ENCODE measurements at regions of chr1 and their contacts with region 1.

Region 1: GRCh38 chr1:67489643-67490042 is 59.4 kb upstream of the SERBP1 start:
- DNase-seq: peak in 2 of 9 donors; percentile 5 to 13
- ATAC-seq: no peak
- H3K4me3 ChIP-seq: no peak overlapping the region
- H3K4me3 Mint-ChIP-seq: no peak overlapping the region
- H3K27ac ChIP-seq: no peak overlapping the region
- H3K27ac Mint-ChIP-seq: no peak overlapping the region
- H3K4me1 ChIP-seq: no peaks in the 10 kb centered on the region
- H3K4me1 Mint-ChIP-seq: peaks cover 0 to under 1% (median 0%) of the 10 kb centered on the region in 7 donors
- H3K27me3 ChIP-seq: no peaks in the 10 kb centered on the region
- H3K27me3 Mint-ChIP-seq: no peaks in the 10 kb centered on the region

Region 2: GRCh38 chr1:67041841-67042503 is 447.7 kb before region 1 on chr1:
- CTCF ChIA-PET with region 1: no interaction called
- POLR2A ChIA-PET with region 1: no interaction called
- intact Hi-C with region 1: no loop called
- DNase-seq: no peak
- ATAC-seq: no peak
- H3K4me3 ChIP-seq: no peak overlapping the region
- H3K4me3 Mint-ChIP-seq: no peak overlapping the region
- H3K27ac ChIP-seq: no peak overlapping the region
- H3K27ac Mint-ChIP-seq: no peak overlapping the region
- H3K4me1 ChIP-seq: no peaks in the 10 kb centered on the region
- H3K4me1 Mint-ChIP-seq: peaks cover 2 to 36% (median 14%) of the 10 kb centered on the region in 7 donors
- H3K27me3 ChIP-seq: no peaks in the 10 kb centered on the region
- H3K27me3 Mint-ChIP-seq: no peaks in the 10 kb centered on the region

Region 3: GRCh38 chr1:67347688-67348472 is 141.8 kb before region 1 on chr1:
- CTCF ChIA-PET with region 1: interaction called, 3 read pairs
- POLR2A ChIA-PET with region 1: no interaction called
- intact Hi-C with region 1: loop called in 1 of 2 experiments (anchors 1 kb)
- DNase-seq: no peak
- ATAC-seq: peak; percentile 34
- H3K4me3 ChIP-seq: no peak overlapping the region
- H3K4me3 Mint-ChIP-seq: no peak overlapping the region
- H3K27ac ChIP-seq: no peak overlapping the region
- H3K27ac Mint-ChIP-seq: peak overlapping the region in 1 of 9 donors; percentile 68
- H3K4me1 ChIP-seq: no peaks in the 10 kb centered on the region
- H3K4me1 Mint-ChIP-seq: peaks cover 3 to 36% (median 8%) of the 10 kb centered on the region in 7 donors
- H3K27me3 ChIP-seq: no peaks in the 10 kb centered on the region
- H3K27me3 Mint-ChIP-seq: no peaks in the 10 kb centered on the region

Measured in naive thymus-derived CD4-positive, alpha-beta T cell (primary cell).